Activated CD8-positive, alpha-beta memory T cell treated with anti-CD3 and anti-CD28 coated beads, Interleukin-2, amount 10 ng/mL, durations not matched to agents 7 days and 5 days (primary cell): ENCODE measurements at regions of chr11 and their contacts with region 1.

Region 1: DNA sequence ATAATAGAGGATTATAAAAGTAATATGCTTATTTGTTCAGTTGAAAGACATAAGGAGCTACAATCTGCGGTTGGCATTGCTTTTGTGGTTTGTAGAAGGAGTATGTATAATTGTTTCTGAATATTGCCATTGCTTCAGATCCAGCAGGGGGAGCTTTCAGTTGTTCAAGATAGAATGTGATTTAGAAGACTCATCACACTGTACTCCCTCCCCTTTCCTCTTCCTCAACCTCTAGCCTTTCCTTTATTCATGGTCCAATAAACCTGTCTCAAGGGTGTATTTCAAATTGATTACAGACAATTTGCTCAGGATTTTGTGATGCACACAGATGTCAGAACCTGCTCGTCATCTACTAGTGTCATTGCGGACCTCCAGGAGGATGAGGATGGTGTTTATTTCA is 9.8 kb downstream of the PRMT3 start:
- DNase-seq: peak; percentile 51
- ATAC-seq: peak; percentile 85
- H3K4me3 Mint-ChIP-seq: no peak overlapping the region
- H3K27ac Mint-ChIP-seq: peak overlapping the region; percentile 40
- H3K4me1 Mint-ChIP-seq: peaks cover 29% of the 10 kb centered on the region
- H3K27me3 Mint-ChIP-seq: no peaks in the 10 kb centered on the region

Region 2: DNA sequence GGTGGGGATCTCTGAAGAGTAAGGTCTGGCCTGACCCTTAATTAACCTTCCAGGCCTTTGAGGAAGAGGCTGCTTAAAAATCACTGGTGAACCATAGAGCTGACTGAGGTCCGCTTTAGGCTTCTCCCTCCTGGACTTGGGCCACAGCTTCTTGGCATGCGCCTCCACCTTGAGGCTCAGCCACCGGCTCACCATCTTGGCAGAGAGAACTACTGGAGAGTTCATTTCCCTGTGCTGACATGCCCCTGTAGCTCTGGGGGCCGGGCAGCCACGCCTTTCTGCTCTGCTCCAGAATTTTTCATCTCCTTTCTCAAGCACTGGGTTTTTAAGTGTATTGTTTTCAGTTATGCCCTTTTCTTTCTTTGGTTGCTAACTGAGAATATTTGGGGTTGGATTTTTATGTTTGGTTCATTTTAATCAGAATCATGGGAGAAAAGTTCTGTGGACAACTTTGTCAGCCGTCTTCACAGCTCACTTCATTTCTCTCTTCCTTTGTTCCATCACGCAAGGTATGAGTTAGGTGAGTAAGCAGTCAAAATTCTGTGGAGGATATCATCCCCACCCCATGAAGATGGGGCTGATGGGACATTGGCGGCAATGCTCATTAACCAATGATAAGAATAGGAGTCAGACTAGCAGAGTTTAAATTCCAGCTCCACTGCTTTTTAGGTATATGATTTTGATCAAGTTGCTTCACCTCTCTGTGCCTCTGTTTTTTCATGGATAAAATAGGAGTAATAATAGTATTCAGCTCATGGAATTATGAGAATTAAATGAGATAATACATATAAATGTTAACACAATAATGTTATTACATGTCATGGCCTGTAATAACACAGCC is 341.0 kb before region 1 on chr11:
- CTCF ChIA-PET with region 1: no interaction called
- DNase-seq: no peak
- ATAC-seq: no peak
- H3K4me3 Mint-ChIP-seq: no peak overlapping the region
- H3K27ac Mint-ChIP-seq: no peak overlapping the region
- H3K4me1 Mint-ChIP-seq: no peaks in the 10 kb centered on the region
- H3K27me3 Mint-ChIP-seq: peaks cover 7% of the 10 kb centered on the region

Region 3: DNA sequence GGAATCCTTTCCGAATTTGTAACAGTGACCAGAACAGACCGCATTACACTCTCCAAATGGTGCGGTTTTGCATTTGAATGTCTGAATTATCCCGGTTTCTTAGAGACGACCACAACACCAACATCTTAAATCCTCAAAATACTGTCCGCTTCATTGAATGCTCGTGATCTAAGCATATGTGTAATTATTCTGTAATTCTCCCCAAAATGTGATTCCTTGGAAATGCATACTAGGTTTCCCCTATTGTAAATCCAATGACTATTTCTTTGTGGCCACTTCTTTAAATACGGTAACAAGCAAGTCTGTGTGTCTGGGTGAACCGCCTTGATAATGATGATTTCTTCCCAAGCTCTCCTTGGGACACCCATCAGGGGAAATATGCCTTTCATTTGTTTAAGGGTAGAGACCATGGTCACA is 149.7 kb before region 1 on chr11:
- CTCF ChIA-PET with region 1: no interaction called
- DNase-seq: no peak
- ATAC-seq: no peak
- H3K4me3 Mint-ChIP-seq: no peak overlapping the region
- H3K27ac Mint-ChIP-seq: no peak overlapping the region
- H3K4me1 Mint-ChIP-seq: no peaks in the 10 kb centered on the region
- H3K27me3 Mint-ChIP-seq: peaks cover 30% of the 10 kb centered on the region

Region 4: GRCh38 chr11:20443596-20443995 is 46.3 kb after region 1 on chr11:
- CTCF ChIA-PET with region 1: interaction called, 17 read pairs
- DNase-seq: no peak
- ATAC-seq: no peak
- H3K4me3 Mint-ChIP-seq: no peak overlapping the region
- H3K27ac Mint-ChIP-seq: no peak overlapping the region
- H3K4me1 Mint-ChIP-seq: peaks cover 5% of the 10 kb centered on the region
- H3K27me3 Mint-ChIP-seq: no peaks in the 10 kb centered on the region

Region 5: DNA sequence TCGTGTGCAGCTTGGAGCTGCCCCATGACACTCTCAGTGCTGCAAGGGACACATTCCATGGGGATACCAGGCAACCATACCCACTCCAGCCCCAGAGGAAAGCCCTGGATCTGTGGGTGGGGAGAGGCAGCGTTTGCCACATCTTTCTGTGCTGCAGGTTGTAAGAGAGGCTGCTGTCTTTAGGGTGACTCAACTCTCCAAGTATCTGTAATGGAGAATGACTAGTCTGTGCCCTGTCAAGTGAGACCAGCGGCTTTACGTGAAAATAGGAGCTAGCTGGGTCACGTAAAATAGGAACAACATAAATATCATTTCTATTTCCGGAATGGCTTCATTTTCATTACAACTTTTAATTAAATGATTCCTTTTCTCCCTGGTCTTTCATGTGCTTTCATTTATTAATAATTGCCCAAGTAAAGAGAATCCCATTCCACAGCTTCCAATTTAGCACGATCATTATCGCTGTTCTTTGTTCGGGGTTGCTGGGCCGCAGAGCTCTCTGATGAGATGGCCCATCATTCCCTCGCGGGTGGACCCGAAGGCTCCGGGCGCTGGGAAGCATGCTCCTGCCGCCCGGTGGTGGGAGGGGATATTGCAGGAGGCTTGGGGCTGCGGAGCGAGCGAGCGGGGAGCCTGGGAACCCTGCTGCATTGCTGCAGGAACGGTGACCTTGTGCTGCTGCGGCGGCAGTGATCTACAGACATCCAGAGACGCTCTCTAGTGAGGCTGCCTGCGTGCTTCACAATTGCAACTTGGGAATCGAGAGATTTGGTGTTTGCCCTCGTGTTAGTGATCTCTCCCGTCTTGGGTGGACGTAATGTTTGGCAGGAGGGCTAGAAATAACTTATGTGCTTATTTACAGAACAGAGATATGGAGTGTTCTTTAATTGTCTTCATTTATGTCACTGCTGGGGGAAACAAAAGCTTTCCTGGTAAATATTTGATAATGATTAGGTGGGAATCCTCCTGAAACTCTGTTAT is 212.7 kb after region 1 on chr11:
- CTCF ChIA-PET with region 1: interaction called, 18 read pairs
- DNase-seq: peak; percentile 70
- ATAC-seq: peak; percentile 86
- H3K4me3 Mint-ChIP-seq: peak overlapping the region; percentile 44
- H3K27ac Mint-ChIP-seq: no peak overlapping the region
- H3K4me1 Mint-ChIP-seq: peaks cover 11% of the 10 kb centered on the region
- H3K27me3 Mint-ChIP-seq: peaks cover 77% of the 10 kb centered on the region